ENCODE measurements at regions of chr1 and their contacts with region 1.

Region 1: GRCh38 chr1:40143891-40144575 is 17.2 kb upstream of the RLF start:
- DNase-seq: peak; percentile 84
- ATAC-seq: peak; percentile 60
- H3K4me3 ChIP-seq: no peak overlapping the region
- H3K4me3 Mint-ChIP-seq: no peak overlapping the region
- H3K27ac ChIP-seq: no peak overlapping the region
- H3K27ac Mint-ChIP-seq: no peak overlapping the region
- H3K4me1 ChIP-seq: peaks cover 3 to 6% of the 10 kb centered on the region in 2 donors
- H3K4me1 Mint-ChIP-seq: peaks cover 7% of the 10 kb centered on the region
- H3K27me3 ChIP-seq: peaks cover 0 to 8% (median 0%) of the 10 kb centered on the region in 4 experiments
- H3K27me3 Mint-ChIP-seq: peaks cover 24% of the 10 kb centered on the region
- CTCF ChIP-seq: peak; percentile 85

Region 2: DNA sequence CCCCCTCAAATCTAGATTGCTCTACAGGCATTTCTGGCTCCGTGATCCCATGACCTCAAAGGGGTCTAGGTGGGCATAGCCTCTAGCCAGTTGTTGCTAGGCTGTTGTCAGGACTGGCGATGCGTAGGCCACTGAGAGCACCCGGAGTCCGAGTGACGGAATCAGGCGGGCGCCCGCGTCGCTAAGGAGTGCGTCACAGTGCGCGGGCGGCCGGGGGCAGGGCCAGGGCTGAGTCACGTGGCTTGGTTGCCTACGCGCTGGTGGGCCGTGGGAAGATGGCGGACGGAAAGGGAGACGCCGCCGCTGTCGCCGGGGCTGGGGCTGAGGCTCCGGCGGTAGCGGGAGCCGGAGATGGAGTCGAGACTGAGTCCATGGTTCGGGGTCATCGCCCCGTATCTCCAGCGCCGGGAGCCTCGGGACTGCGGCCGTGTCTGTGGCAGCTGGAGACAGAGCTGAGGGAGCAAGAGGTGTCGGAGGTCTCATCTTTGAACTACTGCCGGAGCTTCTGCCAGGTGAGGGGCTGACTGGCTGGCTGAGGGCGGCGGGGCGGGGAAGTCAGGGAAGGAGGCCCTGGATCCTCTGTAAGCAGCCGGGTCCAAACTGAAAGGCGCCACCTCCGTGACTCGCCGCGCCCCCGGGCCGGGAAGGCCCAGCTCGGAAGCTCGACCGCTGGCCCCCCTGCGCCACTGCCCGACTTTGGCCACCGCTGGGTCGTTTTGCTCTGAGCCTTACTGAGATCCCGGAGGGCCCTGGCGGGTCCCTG is 17.3 kb after region 1 on chr1 and contains the start of gene RLF:
- CTCF ChIA-PET with region 1: interaction called, 25 read pairs
- POLR2A ChIA-PET with region 1: no interaction called
- intact Hi-C with region 1: no loop called
- DNase-seq: peak; percentile 96
- ATAC-seq: peak; percentile 97
- H3K4me3 ChIP-seq: peak within 1 kb of the TSS; percentile 93 to 97 (median 95)
- H3K4me3 Mint-ChIP-seq: peak within 1 kb of the TSS; percentile 38
- H3K27ac ChIP-seq: peak within 1 kb of the TSS; percentile 96 to 97
- H3K27ac Mint-ChIP-seq: no peak within 1 kb of the TSS
- H3K4me1 ChIP-seq: peaks cover 28 to 39% of the 10 kb centered on the region in 2 donors
- H3K4me1 Mint-ChIP-seq: peaks cover 22% of the 10 kb centered on the region
- H3K27me3 ChIP-seq: no peaks in the 10 kb centered on the region
- H3K27me3 Mint-ChIP-seq: no peaks in the 10 kb centered on the region
- CTCF ChIP-seq: no peak
- total RNA-seq, gene RLF: 21.4 and 21.9 TPM in 2 replicates

Region 3: GRCh38 chr1:40197656-40198055 is 53.6 kb after region 1 on chr1:
- CTCF ChIA-PET with region 1: interaction called, 11 read pairs
- POLR2A ChIA-PET with region 1: no interaction called
- intact Hi-C with region 1: no loop called
- DNase-seq: peak; percentile 25
- ATAC-seq: no peak
- H3K4me3 ChIP-seq: no peak overlapping the region
- H3K4me3 Mint-ChIP-seq: no peak overlapping the region
- H3K27ac ChIP-seq: no peak overlapping the region
- H3K27ac Mint-ChIP-seq: no peak overlapping the region
- H3K4me1 ChIP-seq: no peaks in the 10 kb centered on the region
- H3K4me1 Mint-ChIP-seq: no peaks in the 10 kb centered on the region
- H3K27me3 ChIP-seq: no peaks in the 10 kb centered on the region
- H3K27me3 Mint-ChIP-seq: no peaks in the 10 kb centered on the region
- CTCF ChIP-seq: peak; percentile 54

Region 4: DNA sequence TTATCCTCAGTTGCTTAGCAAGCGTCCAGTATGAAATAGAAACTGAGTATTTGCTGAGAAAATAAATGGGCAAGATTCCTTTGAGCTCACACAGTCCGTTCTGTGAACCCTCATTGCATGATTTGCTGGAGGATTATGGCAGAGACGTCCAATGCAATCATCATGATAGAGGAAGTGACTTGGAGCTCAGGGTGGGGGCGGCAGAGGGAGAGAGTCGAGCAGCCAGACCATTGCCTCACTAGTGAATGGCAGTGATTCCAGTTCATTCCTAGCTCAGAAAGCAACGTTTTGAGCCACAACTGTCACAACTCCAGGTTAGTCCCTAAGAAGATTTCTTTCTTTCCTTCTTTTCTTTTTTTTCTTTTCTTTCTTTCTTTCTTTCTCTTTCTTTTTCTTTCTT is 200.6 kb after region 1 on chr1:
- CTCF ChIA-PET with region 1: interaction called, 252 read pairs
- POLR2A ChIA-PET with region 1: interaction called, 8 read pairs
- intact Hi-C with region 1: no loop called
- DNase-seq: peak; percentile 68
- ATAC-seq: peak; percentile 89
- H3K4me3 ChIP-seq: peak overlapping the region in 4 of 5 experiments; percentile 27 to 62 (median 36)
- H3K4me3 Mint-ChIP-seq: peak overlapping the region; percentile 68
- H3K27ac ChIP-seq: peak overlapping the region; percentile 42 to 71
- H3K27ac Mint-ChIP-seq: peak overlapping the region; percentile 60
- H3K4me1 ChIP-seq: peaks cover 35 to 36% of the 10 kb centered on the region in 2 donors
- H3K4me1 Mint-ChIP-seq: peaks cover 54% of the 10 kb centered on the region
- H3K27me3 ChIP-seq: no peaks in the 10 kb centered on the region
- H3K27me3 Mint-ChIP-seq: no peaks in the 10 kb centered on the region
- CTCF ChIP-seq: no peak

Region 5: DNA sequence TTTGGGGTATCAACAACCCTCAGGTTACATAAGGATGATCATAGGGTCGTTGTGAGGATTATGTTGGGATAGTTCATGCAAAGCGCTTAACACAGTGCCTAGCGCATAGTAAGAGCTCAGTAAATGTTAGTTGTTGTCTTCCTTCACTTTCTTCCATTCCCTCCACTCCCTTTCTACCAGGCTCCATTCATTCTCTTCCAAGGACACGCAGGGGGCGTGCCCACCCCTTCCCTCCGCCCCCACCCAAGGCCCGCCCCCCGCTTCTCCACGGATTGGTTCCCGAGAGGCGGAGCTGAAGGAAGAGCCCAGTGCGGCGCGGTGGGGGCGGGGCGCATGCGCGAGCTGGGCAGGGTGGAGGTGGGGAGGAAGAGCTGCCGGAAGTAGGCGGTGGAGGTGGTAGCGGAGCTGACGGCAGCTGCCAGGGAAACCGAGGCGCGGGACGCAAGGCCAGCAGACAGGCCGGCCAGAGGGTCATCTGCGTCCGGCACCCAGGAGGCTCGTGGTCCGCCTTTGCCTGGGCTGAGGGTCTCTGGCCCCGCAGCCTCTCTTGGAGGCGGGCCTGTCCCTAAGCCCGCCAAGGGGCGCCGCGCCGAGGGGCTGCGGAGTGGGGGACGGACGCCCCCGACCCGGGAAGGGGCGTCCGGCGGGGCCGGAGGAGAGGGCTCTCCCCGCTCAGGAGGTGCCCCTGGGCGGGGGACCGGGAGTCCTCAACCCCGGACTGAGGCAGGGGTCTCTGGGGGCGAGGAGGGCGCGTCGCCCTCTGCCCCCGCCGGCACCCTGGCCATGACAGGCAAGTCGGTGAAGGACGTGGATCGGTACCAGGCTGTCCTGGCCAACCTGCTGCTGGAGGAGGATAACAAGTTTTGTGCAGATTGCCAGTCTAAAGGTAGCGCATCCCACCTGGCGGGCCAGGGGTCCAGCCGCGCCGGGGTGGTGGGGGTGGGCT is 229.6 kb after region 1 on chr1 and contains the start of gene SMAP2:
- CTCF ChIA-PET with region 1: interaction called, 11 read pairs
- POLR2A ChIA-PET with region 1: no interaction called
- intact Hi-C with region 1: no loop called
- DNase-seq: peak; percentile 95
- ATAC-seq: peak; percentile 88
- H3K4me3 ChIP-seq: peak within 1 kb of the TSS; percentile 76 to 100 (median 97)
- H3K4me3 Mint-ChIP-seq: peak within 1 kb of the TSS; percentile 96
- H3K27ac ChIP-seq: peak within 1 kb of the TSS; percentile 89 to 100
- H3K27ac Mint-ChIP-seq: peak within 1 kb of the TSS; percentile 95
- H3K4me1 ChIP-seq: peaks cover 36 to 37% of the 10 kb centered on the region in 2 donors
- H3K4me1 Mint-ChIP-seq: peaks cover 48% of the 10 kb centered on the region
- H3K27me3 ChIP-seq: no peaks in the 10 kb centered on the region
- H3K27me3 Mint-ChIP-seq: no peaks in the 10 kb centered on the region
- CTCF ChIP-seq: no peak
- total RNA-seq, gene SMAP2: 300 and 305 TPM in 2 replicates

Region 6: GRCh38 chr1:40411294-40411693 is 267.3 kb after region 1 on chr1:
- CTCF ChIA-PET with region 1: interaction called, 20 read pairs
- POLR2A ChIA-PET with region 1: no interaction called
- intact Hi-C with region 1: no loop called
- DNase-seq: no peak
- ATAC-seq: no peak
- H3K4me3 ChIP-seq: no peak overlapping the region
- H3K4me3 Mint-ChIP-seq: no peak overlapping the region
- H3K27ac ChIP-seq: no peak overlapping the region
- H3K27ac Mint-ChIP-seq: no peak overlapping the region
- H3K4me1 ChIP-seq: no peaks in the 10 kb centered on the region
- H3K4me1 Mint-ChIP-seq: peaks cover 10% of the 10 kb centered on the region
- H3K27me3 ChIP-seq: no peaks in the 10 kb centered on the region
- H3K27me3 Mint-ChIP-seq: no peaks in the 10 kb centered on the region
- CTCF ChIP-seq: no peak

Region 7: DNA sequence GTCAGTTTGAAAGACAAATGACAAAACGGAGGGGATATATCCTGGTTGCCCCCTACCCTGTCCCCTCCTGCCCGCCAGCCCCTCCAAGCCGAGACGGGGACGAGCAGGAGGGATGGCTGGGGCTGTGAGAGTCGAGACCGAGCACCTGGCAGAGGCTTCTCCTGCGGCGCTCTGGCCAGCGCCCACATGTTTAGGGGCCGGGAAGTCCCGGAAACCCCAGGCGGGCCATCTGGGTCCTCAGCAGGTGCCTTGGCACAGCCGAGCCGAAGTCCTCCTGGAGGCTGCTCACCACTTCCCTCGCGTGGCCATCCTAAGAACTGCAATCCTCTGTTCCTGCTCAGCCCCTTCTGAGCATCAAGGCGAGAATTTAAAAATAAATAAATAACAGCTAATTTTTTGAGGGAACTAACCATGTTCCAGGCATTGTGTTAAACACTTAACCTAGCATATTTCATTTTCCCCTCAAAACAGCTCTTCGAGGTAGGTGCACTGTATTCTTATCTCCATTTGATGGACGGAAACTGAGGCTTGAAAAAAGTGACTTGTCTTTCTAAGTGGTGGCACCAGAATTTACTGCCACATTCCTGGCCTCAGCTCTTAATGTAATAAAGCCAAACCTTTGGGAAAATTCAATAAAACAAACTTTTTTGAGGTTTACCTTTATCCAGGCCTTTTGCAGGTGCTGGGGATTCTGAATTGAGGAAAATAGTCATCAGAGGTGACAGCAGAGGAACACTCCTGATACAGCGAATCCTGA is 524.9 kb after region 1 on chr1:
- CTCF ChIA-PET with region 1: interaction called, 6 read pairs
- POLR2A ChIA-PET with region 1: no interaction called
- intact Hi-C with region 1: loop called (anchors 1 kb)
- DNase-seq: peak; percentile 90
- ATAC-seq: peak; percentile 71
- H3K4me3 ChIP-seq: peak overlapping the region in 4 of 5 experiments; percentile 28 to 69 (median 40)
- H3K4me3 Mint-ChIP-seq: peak overlapping the region; percentile 71
- H3K27ac ChIP-seq: no peak overlapping the region
- H3K27ac Mint-ChIP-seq: peak overlapping the region; percentile 20
- H3K4me1 ChIP-seq: peaks cover 12 to 27% of the 10 kb centered on the region in 2 donors
- H3K4me1 Mint-ChIP-seq: peaks cover 23% of the 10 kb centered on the region
- H3K27me3 ChIP-seq: no peaks in the 10 kb centered on the region
- H3K27me3 Mint-ChIP-seq: peaks cover 5% of the 10 kb centered on the region
- CTCF ChIP-seq: peak; percentile 94